ENCODE measurements at regions of chr6 and their contacts with region 1.

Region 1: DNA sequence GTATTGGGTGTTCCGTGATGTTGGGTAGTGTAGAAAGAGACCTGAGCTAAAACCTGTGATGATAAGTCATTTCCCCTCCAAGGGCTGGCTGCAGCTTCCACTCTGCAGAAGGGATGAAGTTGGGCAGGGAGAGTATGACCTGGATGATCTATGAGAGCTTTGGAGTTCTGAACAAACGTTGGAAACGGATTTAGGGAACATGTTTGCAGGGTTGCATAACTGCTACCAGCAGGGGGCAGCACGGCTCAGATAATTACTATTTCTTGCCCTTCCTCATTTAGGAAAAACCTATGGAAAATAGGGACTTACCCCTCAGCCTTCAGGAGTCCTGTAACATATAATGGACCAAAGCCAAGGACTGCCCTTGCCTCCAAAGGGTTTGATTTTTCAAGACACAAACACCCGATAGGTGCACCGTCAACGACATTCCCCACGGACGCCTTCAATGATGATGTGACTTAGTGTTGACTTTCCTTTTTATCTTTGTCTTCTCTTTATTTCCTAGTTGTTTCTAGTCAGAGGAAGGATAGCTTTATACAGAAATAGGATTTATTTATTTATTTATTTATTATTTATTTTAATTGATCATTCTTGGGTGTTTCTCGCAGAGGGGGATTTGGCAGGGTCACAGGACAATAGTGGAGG is 164.9 kb upstream of the SASH1 start:
- DNase-seq: peak in 5 of 14 experiments; percentile 1 to 53 (median 42)
- ATAC-seq: no peak
- H3K4me3 ChIP-seq: no peak overlapping the region
- H3K4me3 Mint-ChIP-seq: no peak overlapping the region
- H3K27ac ChIP-seq: no peak overlapping the region
- H3K27ac Mint-ChIP-seq: no peak overlapping the region
- H3K4me1 ChIP-seq: no peaks in the 10 kb centered on the region
- H3K4me1 Mint-ChIP-seq: no peaks in the 10 kb centered on the region
- H3K27me3 ChIP-seq: peaks cover 3 to 5% of the 10 kb centered on the region in 2 experiments
- H3K27me3 Mint-ChIP-seq: peaks cover 38% of the 10 kb centered on the region
- CTCF ChIP-seq: peak; percentile 77

Region 2: GRCh38 chr6:147429794-147430193 is 747.9 kb before region 1 on chr6:
- CTCF ChIA-PET with region 1: no interaction called
- POLR2A ChIA-PET with region 1: no interaction called
- intact Hi-C with region 1: no loop called
- DNase-seq: no peak
- ATAC-seq: no peak
- H3K4me3 ChIP-seq: no peak overlapping the region
- H3K4me3 Mint-ChIP-seq: no peak overlapping the region
- H3K27ac ChIP-seq: no peak overlapping the region
- H3K27ac Mint-ChIP-seq: no peak overlapping the region
- H3K4me1 ChIP-seq: no peaks in the 10 kb centered on the region
- H3K4me1 Mint-ChIP-seq: no peaks in the 10 kb centered on the region
- H3K27me3 ChIP-seq: no peaks in the 10 kb centered on the region
- H3K27me3 Mint-ChIP-seq: no peaks in the 10 kb centered on the region
- CTCF ChIP-seq: no peak

Region 3: DNA sequence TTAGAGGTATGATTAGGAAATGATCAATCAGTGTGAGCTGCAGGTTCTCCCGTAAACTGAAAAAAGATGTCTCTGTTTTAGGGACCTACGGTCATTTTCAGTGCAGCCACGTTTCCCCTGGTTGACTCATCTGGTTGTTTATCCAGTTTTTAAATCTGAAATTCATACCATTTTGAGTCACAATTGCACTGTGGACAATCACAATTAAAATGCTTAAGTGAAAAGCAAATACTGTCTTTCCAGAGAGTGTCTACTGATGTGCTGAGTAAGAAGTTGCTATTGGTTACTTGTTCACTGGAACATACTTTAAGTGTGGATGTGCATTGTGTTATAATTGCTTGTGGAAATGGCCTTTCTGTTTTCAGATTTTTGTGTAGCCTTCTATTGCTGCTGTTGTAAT is 140.2 kb before region 1 on chr6:
- CTCF ChIA-PET with region 1: no interaction called
- POLR2A ChIA-PET with region 1: no interaction called
- intact Hi-C with region 1: no loop called
- DNase-seq: no peak
- ATAC-seq: no peak
- H3K4me3 ChIP-seq: no peak overlapping the region
- H3K4me3 Mint-ChIP-seq: no peak overlapping the region
- H3K27ac ChIP-seq: no peak overlapping the region
- H3K27ac Mint-ChIP-seq: no peak overlapping the region
- H3K4me1 ChIP-seq: no peaks in the 10 kb centered on the region
- H3K4me1 Mint-ChIP-seq: no peaks in the 10 kb centered on the region
- H3K27me3 ChIP-seq: no peaks in the 10 kb centered on the region
- H3K27me3 Mint-ChIP-seq: no peaks in the 10 kb centered on the region
- CTCF ChIP-seq: no peak

Region 4: DNA sequence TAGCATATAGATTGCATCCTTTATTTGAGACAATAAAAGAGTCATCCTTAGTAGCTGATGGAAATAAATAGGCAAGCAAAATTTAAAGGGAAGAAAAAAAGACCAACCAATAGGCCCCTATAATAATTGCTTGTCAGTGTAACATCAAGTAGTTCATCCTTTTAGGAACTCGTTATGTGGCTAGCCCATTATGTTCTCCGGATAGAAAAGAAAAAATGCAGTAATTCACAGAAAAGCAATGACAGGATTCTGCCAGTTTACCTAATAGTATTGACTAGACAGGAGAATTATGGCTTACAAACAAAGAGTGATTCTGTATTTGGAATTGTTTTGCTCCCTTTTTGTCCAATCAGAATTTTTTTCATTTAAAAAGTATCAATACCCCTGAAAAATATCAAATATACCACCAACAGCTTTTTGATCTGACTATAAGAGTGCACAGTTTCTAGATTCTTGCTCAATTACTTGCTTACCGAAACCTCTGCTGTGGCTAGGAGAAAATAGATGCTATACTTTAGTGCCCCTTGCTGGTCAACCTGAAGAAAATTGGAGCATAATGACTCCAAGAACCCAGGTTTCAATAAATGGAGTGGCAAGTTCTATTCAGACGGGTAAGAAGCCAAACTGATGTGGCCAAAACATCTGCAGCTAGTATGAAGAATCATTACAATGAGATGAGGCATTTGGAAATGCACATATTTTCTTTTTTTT is 73.4 kb after region 1 on chr6:
- CTCF ChIA-PET with region 1: no interaction called
- POLR2A ChIA-PET with region 1: no interaction called
- intact Hi-C with region 1: loop called in 1 of 2 experiments (anchors 1 kb)
- DNase-seq: peak in 3 of 14 experiments; percentile 21 to 39 (median 39)
- ATAC-seq: no peak
- H3K4me3 ChIP-seq: no peak overlapping the region
- H3K4me3 Mint-ChIP-seq: no peak overlapping the region
- H3K27ac ChIP-seq: no peak overlapping the region
- H3K27ac Mint-ChIP-seq: no peak overlapping the region
- H3K4me1 ChIP-seq: no peaks in the 10 kb centered on the region
- H3K4me1 Mint-ChIP-seq: no peaks in the 10 kb centered on the region
- H3K27me3 ChIP-seq: no peaks in the 10 kb centered on the region
- H3K27me3 Mint-ChIP-seq: peaks cover 30% of the 10 kb centered on the region
- CTCF ChIP-seq: peak; percentile 23

Region 5: DNA sequence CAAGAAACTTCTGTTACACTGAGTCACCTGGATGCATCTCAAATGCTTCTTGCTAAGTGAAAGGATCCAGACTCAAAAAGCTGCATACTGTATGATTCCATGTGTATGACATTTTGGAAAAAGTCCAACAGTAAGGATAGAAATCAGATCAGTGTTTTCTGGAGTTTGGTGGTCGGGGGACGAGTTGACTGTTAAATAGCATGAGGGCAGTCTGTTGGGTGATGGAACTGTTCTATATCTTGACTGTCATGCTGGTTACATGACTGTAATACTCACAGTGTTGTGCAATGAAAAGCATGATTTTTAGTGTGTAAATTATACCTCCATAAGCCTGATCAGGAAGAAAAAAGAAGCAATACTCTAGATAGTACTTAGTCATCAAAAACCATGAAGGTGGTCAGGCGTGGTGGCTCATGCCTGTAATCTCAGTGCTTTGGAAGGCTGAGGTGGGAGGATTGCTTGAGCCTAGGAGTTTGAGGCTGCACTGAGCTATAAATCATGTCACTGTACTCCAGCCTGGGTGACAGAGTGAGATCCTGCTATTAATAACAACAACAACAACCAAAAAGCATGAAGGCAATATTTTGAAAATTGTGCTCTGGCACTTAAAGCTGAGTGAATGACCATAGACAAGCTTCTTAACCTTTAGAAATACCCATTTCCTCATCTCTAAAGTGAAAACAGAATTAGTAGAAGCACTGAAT is 134.4 kb after region 1 on chr6:
- CTCF ChIA-PET with region 1: no interaction called
- POLR2A ChIA-PET with region 1: no interaction called
- intact Hi-C with region 1: no loop called
- DNase-seq: no peak
- ATAC-seq: no peak
- H3K4me3 ChIP-seq: no peak overlapping the region
- H3K4me3 Mint-ChIP-seq: no peak overlapping the region
- H3K27ac ChIP-seq: no peak overlapping the region
- H3K27ac Mint-ChIP-seq: no peak overlapping the region
- H3K4me1 ChIP-seq: no peaks in the 10 kb centered on the region
- H3K4me1 Mint-ChIP-seq: no peaks in the 10 kb centered on the region
- H3K27me3 ChIP-seq: peaks cover 0 to 3% of the 10 kb centered on the region in 2 experiments
- H3K27me3 Mint-ChIP-seq: no peaks in the 10 kb centered on the region
- CTCF ChIP-seq: no peak

Region 6: DNA sequence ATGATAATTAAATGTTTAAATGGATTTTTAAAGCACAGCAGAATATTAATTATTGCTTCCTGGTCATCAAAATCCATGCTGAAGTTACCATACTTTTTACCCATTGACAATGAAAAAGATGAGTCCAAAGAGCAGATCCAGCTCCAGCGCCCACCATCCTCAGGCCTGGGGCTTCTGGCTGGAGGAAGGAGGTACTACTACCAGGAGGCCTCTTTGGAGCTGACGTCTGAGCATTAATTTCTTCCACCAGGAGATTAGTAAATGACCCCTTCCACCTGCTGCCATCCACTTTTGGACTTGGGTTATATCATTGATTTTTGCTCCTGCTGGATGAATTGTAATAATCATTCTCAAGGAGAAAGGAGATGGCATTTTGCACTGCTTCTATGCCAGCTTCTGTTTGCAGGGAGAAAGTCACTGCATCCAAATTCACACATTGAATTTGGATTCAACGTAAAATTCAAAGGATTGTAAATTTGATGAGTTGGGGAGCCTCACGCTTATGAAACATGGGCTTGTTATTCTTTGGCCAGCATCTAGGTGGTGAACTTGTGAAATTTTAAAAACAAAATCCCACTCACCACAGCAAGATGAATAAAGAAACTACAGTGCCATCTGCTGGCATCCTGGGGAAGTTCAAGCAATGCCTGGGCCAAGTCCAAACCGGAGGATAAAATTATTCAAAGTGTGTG is 286.8 kb after region 1 on chr6:
- CTCF ChIA-PET with region 1: no interaction called
- POLR2A ChIA-PET with region 1: no interaction called
- intact Hi-C with region 1: loop called (anchors 1 to 2 kb)
- DNase-seq: peak in 13 of 14 experiments; percentile 19 to 68 (median 28)
- ATAC-seq: peak; percentile 49
- H3K4me3 ChIP-seq: no peak overlapping the region
- H3K4me3 Mint-ChIP-seq: no peak overlapping the region
- H3K27ac ChIP-seq: no peak overlapping the region
- H3K27ac Mint-ChIP-seq: no peak overlapping the region
- H3K4me1 ChIP-seq: peaks cover 3% of the 10 kb centered on the region
- H3K4me1 Mint-ChIP-seq: no peaks in the 10 kb centered on the region
- H3K27me3 ChIP-seq: peaks cover 0 to 5% of the 10 kb centered on the region in 2 experiments
- H3K27me3 Mint-ChIP-seq: peaks cover 27% of the 10 kb centered on the region
- CTCF ChIP-seq: peak; percentile 93

Measured in CD4-positive, alpha-beta T cell (primary cell).